ENCODE measurements at regions of chr9 and their contacts with region 1.

Region 1: DNA sequence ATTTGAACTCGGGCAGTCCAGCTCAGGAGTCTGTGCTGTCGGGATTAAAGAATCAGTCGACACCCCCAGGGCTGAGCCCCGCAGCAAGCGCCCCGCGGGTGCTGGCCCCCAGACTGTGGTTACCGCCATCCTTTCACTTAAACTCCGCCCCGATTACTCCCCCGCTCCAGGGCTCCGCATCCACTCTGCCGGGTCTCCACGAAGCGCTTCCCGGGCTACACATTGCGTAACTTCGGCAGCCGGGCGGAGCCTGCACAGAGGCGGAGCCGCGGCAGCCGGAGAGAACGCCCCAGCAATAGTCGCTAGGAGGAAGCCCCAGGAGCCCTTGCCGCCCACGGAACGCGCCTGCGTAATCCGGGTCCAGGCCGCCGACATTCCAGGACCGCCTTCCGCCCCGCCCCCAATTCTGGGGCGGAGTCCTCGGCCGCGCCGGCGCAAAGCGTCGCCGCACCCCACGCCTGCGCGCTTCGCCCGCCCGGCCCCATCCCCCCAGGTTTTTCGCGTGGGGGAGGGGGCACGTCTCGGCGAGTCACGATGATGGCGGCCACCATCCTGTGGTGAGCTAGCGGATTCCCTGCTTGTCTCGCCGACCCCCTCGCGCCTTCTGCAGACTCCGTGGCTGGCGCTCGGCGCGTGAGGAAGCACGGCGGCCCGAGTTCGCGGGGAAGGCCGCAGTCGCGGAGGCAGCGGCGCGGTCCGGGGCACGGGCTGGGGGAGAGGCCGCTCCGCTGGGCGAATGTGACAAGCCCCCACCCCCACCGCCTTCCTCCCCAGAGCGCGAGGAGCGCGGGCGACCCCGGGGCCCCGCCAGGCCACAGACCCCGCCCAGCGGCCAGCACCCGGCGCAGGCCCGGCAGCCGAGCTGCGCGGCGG is at the start of gene RAD23B:
- DNase-seq: peak; percentile 98
- H3K4me3 Mint-ChIP-seq: peak within 1 kb of the TSS; percentile 88
- H3K27ac Mint-ChIP-seq: peak within 1 kb of the TSS; percentile 92
- H3K4me1 Mint-ChIP-seq: peaks cover 28% of the 10 kb centered on the region
- H3K27me3 Mint-ChIP-seq: no peaks in the 10 kb centered on the region
- CTCF ChIP-seq: no peak
- total RNA-seq, gene RAD23B: 173 and 222 TPM in 2 replicates

Region 2: GRCh38 chr9:107137495-107138202 is 145.3 kb before region 1 on chr9:
- CTCF ChIA-PET with region 1: no interaction called
- POLR2A ChIA-PET with region 1: no interaction called
- intact Hi-C with region 1: no loop called
- DNase-seq: peak; percentile 59
- H3K4me3 Mint-ChIP-seq: no peak overlapping the region
- H3K27ac Mint-ChIP-seq: no peak overlapping the region
- H3K4me1 Mint-ChIP-seq: no peaks in the 10 kb centered on the region
- H3K27me3 Mint-ChIP-seq: peaks cover 33% of the 10 kb centered on the region
- CTCF ChIP-seq: peak; percentile 71

Region 3: GRCh38 chr9:107243751-107244150 is 39.2 kb before region 1 on chr9:
- CTCF ChIA-PET with region 1: interaction called, 9 read pairs
- POLR2A ChIA-PET with region 1: interaction called, 3 read pairs
- intact Hi-C with region 1: loop called (anchors 5 kb)
- DNase-seq: peak; percentile 87
- H3K4me3 Mint-ChIP-seq: no peak overlapping the region
- H3K27ac Mint-ChIP-seq: peak overlapping the region; percentile 38
- H3K4me1 Mint-ChIP-seq: peaks cover 24% of the 10 kb centered on the region
- H3K27me3 Mint-ChIP-seq: no peaks in the 10 kb centered on the region
- CTCF ChIP-seq: no peak

Region 4: GRCh38 chr9:107269681-107270080 is 13.3 kb before region 1 on chr9:
- CTCF ChIA-PET with region 1: interaction called, 3 read pairs
- POLR2A ChIA-PET with region 1: interaction called, 13 read pairs
- intact Hi-C with region 1: no loop called
- DNase-seq: peak; percentile 61
- H3K4me3 Mint-ChIP-seq: no peak overlapping the region
- H3K27ac Mint-ChIP-seq: no peak overlapping the region
- H3K4me1 Mint-ChIP-seq: peaks cover 31% of the 10 kb centered on the region
- H3K27me3 Mint-ChIP-seq: no peaks in the 10 kb centered on the region
- CTCF ChIP-seq: no peak